ENCODE measurements at regions of chr2 and their contacts with region 1.

Region 1: DNA sequence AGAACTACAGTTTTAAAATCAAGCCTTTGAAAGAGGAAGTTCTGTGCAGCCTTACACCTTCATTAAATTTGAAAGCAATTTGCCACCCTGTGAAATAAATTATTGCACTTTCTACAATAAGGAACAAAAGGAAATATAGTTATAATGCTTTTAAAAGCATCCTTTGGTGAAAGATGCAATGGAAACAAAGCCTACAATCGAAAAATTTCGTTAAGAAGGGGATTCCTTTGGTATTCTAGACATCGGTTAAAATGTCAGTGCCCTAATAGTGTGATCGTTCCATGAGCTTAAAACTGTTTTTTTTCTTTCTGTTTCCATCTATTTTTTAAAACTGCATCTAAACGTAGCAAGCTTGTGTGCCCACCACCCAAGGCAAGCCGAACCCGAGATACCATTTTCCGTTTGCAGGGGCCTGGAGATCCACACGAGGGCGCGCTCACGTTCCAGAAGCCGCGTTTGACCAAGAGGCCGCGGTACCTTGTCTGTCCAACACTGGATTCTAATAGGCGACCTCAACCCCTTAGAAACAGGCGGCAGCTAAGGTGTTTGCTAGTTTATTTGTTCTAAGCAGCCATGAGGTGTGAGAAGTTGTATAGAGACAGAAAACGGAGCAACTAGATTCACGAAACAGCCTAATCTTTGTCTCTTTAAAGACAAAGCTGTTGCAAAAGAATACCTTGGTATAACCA is 4.0 kb downstream of the HOXD11 start:
- DNase-seq: peak; percentile 62 to 66 (median 65)
- H3K4me3 ChIP-seq: no peak overlapping the region
- H3K27ac ChIP-seq: no peak overlapping the region
- H3K4me1 ChIP-seq: peaks cover 0 to 10% (median 6%) of the 10 kb centered on the region in 4 experiments
- H3K27me3 ChIP-seq: peaks cover 29 to 99% (median 70%) of the 10 kb centered on the region in 5 experiments

Region 2: GRCh38 chr2:176135034-176135440 is 23.9 kb after region 1 on chr2:
- CTCF ChIA-PET with region 1: interaction called, 11 read pairs
- POLR2A ChIA-PET with region 1: no interaction called
- DNase-seq: no peak
- H3K4me3 ChIP-seq: no peak overlapping the region
- H3K27ac ChIP-seq: no peak overlapping the region
- H3K4me1 ChIP-seq: peaks cover 4 to 11% (median 11%) of the 10 kb centered on the region in 4 experiments
- H3K27me3 ChIP-seq: peaks cover 64 to 100% (median 72%) of the 10 kb centered on the region in 5 experiments